ENCODE measurements at regions of chr11 and their contacts with region 1.

Region 1: GRCh38 chr11:9060700-9061111 is 30.7 kb downstream of the SCUBE2 start:
- DNase-seq: peak; percentile 41
- ATAC-seq: peak; percentile 32; the same call in 1 of the 2 replicates
- H3K4me3 ChIP-seq: no peak overlapping the region
- H3K27ac ChIP-seq: no peak overlapping the region
- H3K4me1 ChIP-seq: no peaks in the 10 kb centered on the region
- H3K27me3 ChIP-seq: no peaks in the 10 kb centered on the region
- CTCF ChIP-seq: peak; percentile 53

Region 2: DNA sequence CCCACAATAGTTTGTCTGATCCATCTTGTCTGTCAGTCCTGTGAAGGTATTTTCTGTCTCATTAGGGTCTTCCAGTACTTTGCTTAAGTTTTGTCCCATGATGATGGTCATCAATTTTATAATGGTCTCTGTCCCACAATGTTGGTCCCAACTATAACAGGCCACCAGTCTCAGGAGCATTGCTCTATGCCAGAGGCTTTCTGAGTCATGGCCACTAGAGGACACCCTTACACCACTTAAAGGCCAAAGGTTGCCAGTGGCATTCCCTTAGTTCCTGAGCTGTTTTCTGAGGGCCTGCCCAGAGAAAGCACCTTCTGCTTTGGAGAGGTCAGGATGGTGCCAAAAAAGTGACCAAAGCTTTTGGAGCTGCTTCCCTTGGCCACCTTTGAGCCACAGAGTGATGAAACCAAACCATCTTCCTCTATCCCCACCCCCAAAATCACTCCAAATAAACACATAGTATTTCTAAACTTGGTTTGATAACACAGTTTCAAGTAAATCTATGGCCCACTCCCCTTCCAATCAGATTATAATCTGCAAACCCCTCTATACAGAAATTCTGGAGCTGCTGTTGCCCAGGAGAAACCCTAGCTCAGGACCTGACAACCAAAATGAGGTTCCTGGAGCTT is 1054.2 kb before region 1 on chr11:
- CTCF ChIA-PET with region 1: interaction called, 10 read pairs
- POLR2A ChIA-PET with region 1: no interaction called
- intact Hi-C with region 1: no loop called
- DNase-seq: peak; percentile 82
- ATAC-seq: peak; percentile 94
- H3K4me3 ChIP-seq: no peak overlapping the region
- H3K27ac ChIP-seq: no peak overlapping the region
- H3K4me1 ChIP-seq: no peaks in the 10 kb centered on the region
- H3K27me3 ChIP-seq: no peaks in the 10 kb centered on the region
- CTCF ChIP-seq: peak; percentile 92

Measured in PC-3 (cell line).